Gastrocnemius medialis (tissue), 4 donors: ENCODE measurements at regions of chr6 and their contacts with region 1.

Region 1: GRCh38 chr6:41723530-41724227 is 11.7 kb downstream of the TFEB start:
- DNase-seq: peak; percentile 87 to 88
- ATAC-seq: peak; percentile 55 to 66
- H3K4me3 ChIP-seq: peak overlapping the region; percentile 24 to 36 (median 34)
- H3K27ac ChIP-seq: peak overlapping the region; percentile 97 to 99 (median 98)
- H3K4me1 ChIP-seq: peaks cover 92 to 100% of the 10 kb centered on the region in 2 donors
- H3K27me3 ChIP-seq: no peaks in the 10 kb centered on the region
- CTCF ChIP-seq: peak in 2 of 5 experiments; percentile 20 to 24
- POLR2A ChIP-seq: peak; percentile 82 to 87

Region 2: GRCh38 chr6:41558033-41558807 is 165.5 kb before region 1 on chr6:
- in situ Hi-C with region 1: no loop called
- intact Hi-C with region 1: no loop called
- DNase-seq: no peak
- ATAC-seq: no peak
- H3K4me3 ChIP-seq: no peak overlapping the region
- H3K27ac ChIP-seq: no peak overlapping the region
- H3K4me1 ChIP-seq: peaks cover 15 to 33% of the 10 kb centered on the region in 2 donors
- H3K27me3 ChIP-seq: no peaks in the 10 kb centered on the region
- CTCF ChIP-seq: no peak
- POLR2A ChIP-seq: no peak

Region 3: GRCh38 chr6:41675176-41675770 is 48.4 kb before region 1 on chr6:
- in situ Hi-C with region 1: no loop called
- intact Hi-C with region 1: no loop called
- DNase-seq: no peak
- ATAC-seq: no peak
- H3K4me3 ChIP-seq: no peak overlapping the region
- H3K27ac ChIP-seq: no peak overlapping the region
- H3K4me1 ChIP-seq: no peaks in the 10 kb centered on the region
- H3K27me3 ChIP-seq: no peaks in the 10 kb centered on the region
- CTCF ChIP-seq: no peak
- POLR2A ChIP-seq: no peak

Region 4: DNA sequence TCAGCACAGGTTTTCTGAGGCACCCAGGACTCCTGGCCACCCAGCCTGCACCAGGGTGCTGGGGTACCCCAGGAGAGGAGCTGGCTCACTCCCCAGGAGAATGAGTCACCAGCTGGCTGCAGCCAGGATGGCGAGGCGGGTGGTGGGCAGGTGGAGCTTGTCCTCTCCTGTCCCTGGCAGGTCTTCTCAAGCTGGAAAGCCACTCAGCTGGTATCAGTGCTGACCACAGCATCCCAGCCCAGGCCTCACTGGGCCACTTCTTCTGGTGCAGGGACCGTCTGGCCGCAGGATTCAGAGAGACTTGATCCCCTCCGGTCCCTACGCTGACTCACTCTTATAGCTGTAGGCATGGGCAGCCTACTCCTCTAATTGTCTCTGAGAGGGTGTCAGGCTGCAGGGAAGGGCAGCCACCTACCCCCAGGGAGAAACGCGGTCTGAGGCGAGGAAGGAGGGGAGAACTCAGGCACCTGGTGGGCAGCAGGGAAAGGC is 10.5 kb before region 1 on chr6:
- in situ Hi-C with region 1: no loop called
- intact Hi-C with region 1: loop called (anchors 1 kb)
- DNase-seq: peak; percentile 84 to 93
- ATAC-seq: peak; percentile 53 to 63
- H3K4me3 ChIP-seq: peak overlapping the region in 1 of 4 donors; percentile 10
- H3K27ac ChIP-seq: peak overlapping the region; percentile 97 to 99 (median 98)
- H3K4me1 ChIP-seq: peaks cover 100% of the 10 kb centered on the region in 2 donors
- H3K27me3 ChIP-seq: no peaks in the 10 kb centered on the region
- CTCF ChIP-seq: no peak
- POLR2A ChIP-seq: peak in 1 of 2 donors; percentile 63